ENCODE measurements at regions of chr2 and their contacts with region 1.

Region 1: GRCh38 chr2:127591221-127591923 is 54.6 kb upstream of the GPR17 start:
- DNase-seq: peak in 1 of 2 donors; percentile 64
- H3K4me3 ChIP-seq: no peak overlapping the region
- H3K27ac ChIP-seq: no peak overlapping the region
- H3K4me1 ChIP-seq: no peaks in the 10 kb centered on the region
- H3K27me3 ChIP-seq: no peaks in the 10 kb centered on the region
- CTCF ChIP-seq: peak; percentile 57 to 81 (median 78)

Region 2: GRCh38 chr2:127623388-127624245 is 32.2 kb after region 1 on chr2:
- intact Hi-C with region 1: no loop called
- DNase-seq: peak in 1 of 2 donors; percentile 59
- H3K4me3 ChIP-seq: no peak overlapping the region
- H3K27ac ChIP-seq: no peak overlapping the region
- H3K4me1 ChIP-seq: no peaks in the 10 kb centered on the region
- H3K27me3 ChIP-seq: no peaks in the 10 kb centered on the region
- CTCF ChIP-seq: no peak

Region 3: DNA sequence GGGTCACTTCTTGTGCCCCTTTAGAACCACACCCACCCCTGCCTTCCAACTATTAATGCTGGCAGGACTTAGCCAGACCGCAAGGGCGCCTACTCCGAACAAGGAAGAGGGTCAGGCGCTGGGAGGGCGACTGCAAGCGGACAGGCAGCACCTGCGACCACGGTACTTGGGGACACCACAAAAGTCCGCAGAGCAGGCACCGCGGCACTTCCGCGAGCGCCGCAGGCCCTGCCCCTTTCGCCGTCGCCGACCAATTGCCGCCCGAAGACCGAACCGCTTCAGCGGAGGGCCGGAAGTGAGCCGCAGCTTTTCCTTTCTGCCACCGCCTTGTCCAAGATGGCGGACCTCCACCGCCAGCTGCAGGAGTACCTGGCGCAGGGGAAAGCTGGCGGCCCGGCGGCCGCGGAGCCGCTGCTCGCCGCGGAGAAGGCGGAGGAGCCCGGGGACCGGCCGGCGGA is 109.8 kb after region 1 on chr2 and contains the start of gene SFT2D3:
- intact Hi-C with region 1: loop called (anchors 5 kb)
- DNase-seq: peak; percentile 52 to 95
- H3K4me3 ChIP-seq: peak within 1 kb of the TSS; percentile 81 to 86
- H3K27ac ChIP-seq: peak within 1 kb of the TSS; percentile 90 to 93
- H3K4me1 ChIP-seq: peaks cover 0 to 22% of the 10 kb centered on the region in 2 donors
- H3K27me3 ChIP-seq: no peaks in the 10 kb centered on the region
- CTCF ChIP-seq: no peak
- total RNA-seq, gene SFT2D3: 8.3 TPM